ENCODE measurements at regions of chr7 and their contacts with region 1.

Region 1: DNA sequence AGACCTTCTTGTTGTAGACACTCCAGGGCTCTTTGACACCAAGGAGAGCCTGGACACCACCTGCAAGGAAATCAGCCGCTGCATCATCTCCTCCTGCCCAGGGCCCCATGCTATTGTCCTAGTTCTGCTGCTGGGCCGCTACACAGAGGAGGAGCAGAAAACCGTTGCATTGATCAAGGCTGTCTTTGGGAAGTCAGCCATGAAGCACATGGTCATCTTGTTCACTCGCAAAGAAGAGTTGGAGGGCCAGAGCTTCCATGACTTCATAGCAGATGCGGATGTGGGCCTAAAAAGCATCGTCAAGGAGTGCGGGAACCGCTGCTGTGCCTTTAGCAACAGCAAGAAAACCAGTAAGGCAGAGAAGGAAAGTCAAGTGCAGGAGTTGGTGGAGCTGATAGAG is 5.5 kb downstream of the GIMAP7 start:
- DNase-seq: peak in 9 of 14 experiments; percentile 23 to 59 (median 47)
- ATAC-seq: peak; percentile 33
- H3K4me3 ChIP-seq: peak overlapping the region; percentile 79
- H3K4me3 Mint-ChIP-seq: peak overlapping the region; percentile 100
- H3K27ac ChIP-seq: peak overlapping the region; percentile 59 to 60
- H3K27ac Mint-ChIP-seq: peak overlapping the region; percentile 93
- H3K4me1 ChIP-seq: peaks cover 12% of the 10 kb centered on the region
- H3K4me1 Mint-ChIP-seq: peaks cover 36% of the 10 kb centered on the region
- H3K27me3 ChIP-seq: no peaks in the 10 kb centered on the region
- H3K27me3 Mint-ChIP-seq: no peaks in the 10 kb centered on the region
- CTCF ChIP-seq: no peak

Region 2: DNA sequence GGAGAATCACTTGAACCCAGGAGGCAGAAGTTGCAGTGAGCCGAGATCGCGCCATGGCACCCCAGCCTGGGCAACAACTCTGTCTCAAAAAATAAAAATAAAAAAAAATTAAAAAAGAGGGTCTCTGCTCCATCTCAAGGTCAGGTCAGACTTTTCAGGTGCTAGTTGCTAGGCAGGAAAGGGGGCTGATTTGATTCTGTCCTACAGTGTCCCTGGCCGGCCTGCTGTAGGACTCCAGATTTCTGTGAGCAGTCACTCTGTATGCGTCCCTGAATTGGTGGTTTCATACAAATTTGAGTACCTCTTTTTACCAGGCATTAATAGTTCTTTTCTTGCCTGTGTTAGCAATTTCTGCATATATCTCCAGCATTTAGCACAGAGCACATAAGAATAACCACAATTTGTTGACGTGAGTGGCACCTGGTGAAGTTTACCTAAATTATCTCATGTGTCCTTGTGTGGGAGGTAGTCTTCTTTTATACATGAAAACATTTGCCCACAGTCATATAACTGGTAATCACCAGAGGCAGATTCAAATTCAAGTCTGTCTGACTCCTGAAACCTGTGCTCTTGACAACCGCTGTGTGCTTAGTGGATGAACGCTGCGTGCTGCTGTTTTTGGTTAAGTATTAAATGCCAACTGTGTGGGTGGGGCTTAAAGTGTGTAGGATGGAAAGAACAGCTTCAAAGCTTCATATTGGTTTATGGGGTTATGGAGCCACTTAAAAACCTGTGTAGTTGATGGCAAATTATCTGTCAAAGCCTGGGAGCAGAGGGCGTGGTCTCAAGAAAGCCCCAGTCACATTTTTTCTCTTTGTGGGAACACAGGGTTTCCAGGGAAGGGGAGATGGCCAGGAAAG is 144.3 kb before region 1 on chr7:
- CTCF ChIA-PET with region 1: no interaction called
- POLR2A ChIA-PET with region 1: no interaction called
- intact Hi-C with region 1: no loop called
- DNase-seq: peak in 6 of 14 experiments; percentile 22 to 64 (median 51)
- ATAC-seq: peak; percentile 32
- H3K4me3 ChIP-seq: no peak overlapping the region
- H3K4me3 Mint-ChIP-seq: peak overlapping the region; percentile 85
- H3K27ac ChIP-seq: peak overlapping the region in 1 of 2 donors; percentile 18
- H3K27ac Mint-ChIP-seq: peak overlapping the region; percentile 86
- H3K4me1 ChIP-seq: peaks cover 50% of the 10 kb centered on the region
- H3K4me1 Mint-ChIP-seq: peaks cover 69% of the 10 kb centered on the region
- H3K27me3 ChIP-seq: no peaks in the 10 kb centered on the region
- H3K27me3 Mint-ChIP-seq: no peaks in the 10 kb centered on the region
- CTCF ChIP-seq: no peak

Region 3: DNA sequence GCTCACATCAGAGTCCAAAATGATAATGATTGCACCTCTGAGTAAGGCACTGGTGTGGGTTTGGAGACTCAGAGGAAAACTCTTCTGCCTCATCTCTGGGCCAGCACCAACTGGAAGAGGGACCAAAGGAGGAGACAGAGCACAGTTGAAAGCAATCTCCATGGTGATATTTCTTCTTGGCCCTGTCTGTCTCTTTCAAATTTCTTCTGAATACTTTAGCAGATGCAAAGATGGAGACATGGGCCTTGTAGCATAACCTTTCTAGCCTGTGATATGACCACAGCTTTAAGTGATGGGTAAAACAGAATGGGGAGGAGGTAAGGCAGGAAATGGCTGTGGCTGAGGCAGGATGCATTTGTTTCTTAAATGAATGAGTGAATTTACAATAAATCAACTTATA is 17.6 kb before region 1 on chr7:
- CTCF ChIA-PET with region 1: interaction called, 5 read pairs
- POLR2A ChIA-PET with region 1: interaction called, 102 read pairs
- intact Hi-C with region 1: loop called in 1 of 2 experiments (anchors 2 kb)
- DNase-seq: peak in 6 of 14 experiments; percentile 38 to 85 (median 64)
- ATAC-seq: peak; percentile 83
- H3K4me3 ChIP-seq: no peak overlapping the region
- H3K4me3 Mint-ChIP-seq: peak overlapping the region; percentile 50
- H3K27ac ChIP-seq: peak overlapping the region; percentile 66 to 69
- H3K27ac Mint-ChIP-seq: peak overlapping the region; percentile 88
- H3K4me1 ChIP-seq: peaks cover 44% of the 10 kb centered on the region
- H3K4me1 Mint-ChIP-seq: peaks cover 89% of the 10 kb centered on the region
- H3K27me3 ChIP-seq: no peaks in the 10 kb centered on the region
- H3K27me3 Mint-ChIP-seq: no peaks in the 10 kb centered on the region
- CTCF ChIP-seq: no peak

Region 4: DNA sequence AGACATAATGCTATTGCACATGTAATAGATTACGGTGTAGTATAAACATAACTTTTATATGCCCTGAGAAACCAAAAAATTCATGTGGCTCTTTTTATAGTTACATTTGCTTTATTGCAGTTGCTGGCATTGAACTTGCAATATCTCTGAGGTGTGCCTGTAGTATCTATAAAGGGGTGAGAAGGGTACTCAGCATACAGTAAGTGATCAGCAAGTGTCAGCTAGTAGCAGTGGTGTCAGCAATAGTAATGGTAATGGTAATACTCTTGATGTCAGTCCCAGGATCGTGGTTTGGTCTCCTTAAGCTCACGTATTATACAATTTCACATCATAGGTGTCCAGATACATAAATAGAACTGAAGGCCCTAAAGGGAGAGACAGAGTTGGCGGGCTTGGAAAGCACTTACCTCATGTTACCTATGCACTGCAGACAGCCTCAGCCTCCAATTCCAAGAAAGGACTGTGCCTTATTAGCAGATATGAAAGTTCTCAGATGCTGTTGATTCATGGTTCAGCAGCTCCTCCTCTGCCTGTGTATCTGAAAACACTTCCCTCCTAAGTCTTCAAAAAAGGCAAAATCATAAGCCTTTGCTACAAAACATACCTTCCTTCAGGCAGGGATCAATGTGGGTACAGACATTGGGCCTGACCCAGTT is 12.1 kb before region 1 on chr7:
- CTCF ChIA-PET with region 1: interaction called, 5 read pairs
- POLR2A ChIA-PET with region 1: interaction called, 102 read pairs
- intact Hi-C with region 1: loop called in 1 of 2 experiments (anchors 2 kb)
- DNase-seq: peak in 5 of 14 experiments; percentile 46 to 54 (median 49)
- ATAC-seq: peak; percentile 43
- H3K4me3 ChIP-seq: peak overlapping the region; percentile 38
- H3K4me3 Mint-ChIP-seq: peak overlapping the region; percentile 84
- H3K27ac ChIP-seq: peak overlapping the region; percentile 3 to 71
- H3K27ac Mint-ChIP-seq: peak overlapping the region; percentile 93
- H3K4me1 ChIP-seq: peaks cover 77% of the 10 kb centered on the region
- H3K4me1 Mint-ChIP-seq: peaks cover 95% of the 10 kb centered on the region
- H3K27me3 ChIP-seq: no peaks in the 10 kb centered on the region
- H3K27me3 Mint-ChIP-seq: no peaks in the 10 kb centered on the region
- CTCF ChIP-seq: no peak

Region 5: GRCh38 chr7:150580638-150581394 is 60.7 kb after region 1 on chr7:
- CTCF ChIA-PET with region 1: no interaction called
- POLR2A ChIA-PET with region 1: interaction called, 3 read pairs
- intact Hi-C with region 1: loop called in 1 of 2 experiments (anchors 5 kb)
- DNase-seq: no peak
- ATAC-seq: no peak
- H3K4me3 ChIP-seq: no peak overlapping the region
- H3K4me3 Mint-ChIP-seq: no peak overlapping the region
- H3K27ac ChIP-seq: no peak overlapping the region
- H3K27ac Mint-ChIP-seq: peak overlapping the region; percentile 47
- H3K4me1 ChIP-seq: peaks cover 12% of the 10 kb centered on the region
- H3K4me1 Mint-ChIP-seq: peaks cover 41% of the 10 kb centered on the region
- H3K27me3 ChIP-seq: no peaks in the 10 kb centered on the region
- H3K27me3 Mint-ChIP-seq: no peaks in the 10 kb centered on the region
- CTCF ChIP-seq: no peak

Region 6: DNA sequence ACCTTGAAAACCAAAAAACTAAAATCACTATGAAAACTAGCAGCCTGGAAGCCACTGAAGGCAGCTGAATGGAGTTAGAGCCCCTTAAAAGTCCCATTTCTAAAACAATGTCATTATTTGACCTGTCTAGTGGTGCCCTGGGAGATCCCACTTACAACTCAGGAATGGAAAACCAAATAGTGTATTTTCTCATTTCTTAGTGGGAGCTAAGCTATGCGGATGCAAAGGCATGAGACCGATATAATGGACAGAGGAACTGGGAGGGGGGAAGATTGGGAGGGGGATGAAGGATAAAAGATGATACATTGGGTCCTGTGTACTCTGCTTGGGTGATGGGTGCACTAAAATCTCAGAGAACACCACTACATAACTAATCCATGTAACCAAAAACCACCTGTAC is 155.6 kb after region 1 on chr7:
- CTCF ChIA-PET with region 1: no interaction called
- POLR2A ChIA-PET with region 1: interaction called, 11 read pairs
- intact Hi-C with region 1: no loop called
- DNase-seq: no peak
- ATAC-seq: no peak
- H3K4me3 ChIP-seq: peak overlapping the region; percentile 8
- H3K4me3 Mint-ChIP-seq: peak overlapping the region; percentile 78
- H3K27ac ChIP-seq: peak overlapping the region; percentile 58 to 78
- H3K27ac Mint-ChIP-seq: peak overlapping the region; percentile 79
- H3K4me1 ChIP-seq: peaks cover 40% of the 10 kb centered on the region
- H3K4me1 Mint-ChIP-seq: peaks cover 87% of the 10 kb centered on the region
- H3K27me3 ChIP-seq: no peaks in the 10 kb centered on the region
- H3K27me3 Mint-ChIP-seq: no peaks in the 10 kb centered on the region
- CTCF ChIP-seq: no peak